WTC11 (cell line): ENCODE measurements at regions of chr3 and their contacts with region 1.

Region 1: GRCh38 chr3:58008140-58009025 is at the start of gene FLNB:
- DNase-seq: peak; percentile 82
- ATAC-seq: peak; percentile 73
- H3K4me3 Mint-ChIP-seq: peak within 1 kb of the TSS; percentile 92
- H3K27ac Mint-ChIP-seq: peak within 1 kb of the TSS; percentile 92
- H3K4me1 Mint-ChIP-seq: peaks cover 42% of the 10 kb centered on the region
- H3K27me3 Mint-ChIP-seq: no peaks in the 10 kb centered on the region
- CTCF ChIP-seq: peak; percentile 55
- total RNA-seq, gene FLNB: 107 to 127 TPM (median 107 TPM) in 3 replicates

Region 2: DNA sequence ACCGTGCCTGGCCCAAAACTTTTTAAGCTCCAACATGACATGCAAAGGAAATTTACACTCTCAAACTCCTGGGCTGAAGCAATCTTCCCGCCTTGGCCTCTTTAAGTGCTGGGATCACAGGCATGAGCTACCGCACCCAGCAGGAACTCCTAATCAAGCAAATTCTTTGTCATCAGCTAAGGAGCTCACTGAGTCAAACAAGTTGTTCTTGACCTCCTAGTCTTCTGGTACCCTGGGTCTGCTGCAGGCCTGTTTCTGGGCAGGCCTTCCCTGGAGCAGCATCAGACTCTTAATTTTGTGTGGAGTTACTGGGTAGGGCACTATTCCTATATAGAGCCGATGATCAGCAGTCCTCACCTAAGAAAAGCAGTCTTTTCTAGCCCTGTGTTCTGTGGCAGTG is 68.6 kb before region 1 on chr3:
- CTCF ChIA-PET with region 1: no interaction called
- POLR2A ChIA-PET with region 1: no interaction called
- DNase-seq: no peak
- ATAC-seq: peak; percentile 45
- H3K4me3 Mint-ChIP-seq: no peak overlapping the region
- H3K27ac Mint-ChIP-seq: peak overlapping the region; percentile 78
- H3K4me1 Mint-ChIP-seq: peaks cover 11% of the 10 kb centered on the region
- H3K27me3 Mint-ChIP-seq: no peaks in the 10 kb centered on the region; the same call in 1 of the 2 replicates
- CTCF ChIP-seq: no peak

Region 3: DNA sequence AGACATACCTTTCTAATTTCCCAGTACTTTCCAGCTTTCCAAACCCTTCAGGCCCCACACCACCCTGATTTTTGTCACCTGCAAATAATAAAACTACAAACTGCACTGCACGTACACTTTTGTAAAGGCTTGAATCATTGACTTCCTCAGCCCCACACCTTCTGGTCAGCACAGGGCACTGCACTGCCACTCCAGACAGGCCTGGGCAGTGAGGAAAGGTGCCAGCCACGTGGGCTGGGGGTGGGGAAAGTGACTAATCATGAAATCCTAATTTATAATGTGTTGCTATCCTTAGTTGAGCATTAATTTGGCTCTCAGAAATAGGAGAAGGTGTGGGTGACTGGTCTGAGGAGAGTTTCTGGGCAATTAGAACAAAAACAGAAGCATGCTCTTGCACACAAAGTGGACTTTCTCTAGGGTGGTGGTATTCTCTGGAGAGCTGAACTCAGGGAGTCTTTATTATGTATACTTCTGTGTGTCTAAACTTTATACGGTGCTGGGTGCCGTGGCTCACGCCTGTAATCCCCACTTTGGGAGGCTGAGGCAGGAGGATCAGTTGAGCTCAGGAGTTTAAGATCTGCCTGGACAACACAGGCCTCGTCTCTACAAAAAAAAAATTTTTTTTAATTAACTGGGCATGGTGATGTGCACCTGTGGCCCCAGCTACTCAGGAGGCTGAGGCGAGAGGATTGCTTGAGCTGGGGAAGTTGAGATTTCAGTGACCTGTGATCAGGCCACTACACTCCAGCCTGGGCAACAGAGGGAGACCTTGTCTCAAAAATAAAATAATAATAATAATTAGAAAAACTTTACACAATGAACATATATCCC is 58.4 kb before region 1 on chr3:
- CTCF ChIA-PET with region 1: interaction called, 10 read pairs
- POLR2A ChIA-PET with region 1: no interaction called
- DNase-seq: no peak
- ATAC-seq: no peak
- H3K4me3 Mint-ChIP-seq: no peak overlapping the region
- H3K27ac Mint-ChIP-seq: no peak overlapping the region
- H3K4me1 Mint-ChIP-seq: peaks cover 38% of the 10 kb centered on the region
- H3K27me3 Mint-ChIP-seq: no peaks in the 10 kb centered on the region
- CTCF ChIP-seq: no peak

Region 4: GRCh38 chr3:58020783-58021071 is 12.3 kb after region 1 on chr3:
- CTCF ChIA-PET with region 1: interaction called, 17 read pairs
- POLR2A ChIA-PET with region 1: interaction called, 8 read pairs
- DNase-seq: no peak
- ATAC-seq: no peak
- H3K4me3 Mint-ChIP-seq: peak overlapping the region; percentile 42
- H3K27ac Mint-ChIP-seq: peak overlapping the region; percentile 99
- H3K4me1 Mint-ChIP-seq: peaks cover 84% of the 10 kb centered on the region
- H3K27me3 Mint-ChIP-seq: no peaks in the 10 kb centered on the region
- CTCF ChIP-seq: no peak

Region 5: DNA sequence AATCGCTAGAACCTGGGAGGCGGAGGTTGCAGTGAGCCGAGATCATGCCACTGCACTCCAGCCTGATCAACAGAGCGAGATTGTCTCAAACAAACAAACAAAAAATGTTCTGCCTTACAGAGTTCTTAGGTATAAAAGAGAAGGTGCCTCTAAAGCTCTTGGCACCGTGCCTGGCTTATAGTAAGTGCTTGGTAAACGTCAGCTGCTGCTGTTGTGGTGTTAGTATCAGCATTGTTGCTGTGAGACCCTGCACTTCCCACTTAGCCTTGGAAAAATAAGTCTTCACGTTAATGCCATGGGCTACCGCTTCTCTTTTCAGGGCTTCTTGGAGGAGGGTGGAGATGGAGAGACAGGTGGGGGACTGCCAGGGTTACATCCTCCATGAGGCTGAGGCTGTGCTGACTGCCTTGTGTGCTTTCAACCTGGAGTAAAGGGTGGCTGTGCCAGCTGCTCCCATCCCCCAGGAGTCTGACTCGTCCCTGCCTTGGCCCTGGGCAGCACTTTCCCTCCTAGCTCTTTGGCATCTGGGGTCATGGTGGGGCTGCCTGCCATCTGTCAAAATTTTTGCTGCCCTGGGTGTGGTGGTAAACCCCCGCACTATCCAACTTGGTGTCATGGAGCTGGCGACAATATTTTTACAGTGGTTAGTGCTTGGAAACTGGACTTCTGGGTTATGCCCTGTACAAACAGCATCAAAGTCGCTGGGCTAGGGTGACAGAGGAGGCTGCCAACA is 17.6 kb after region 1 on chr3:
- CTCF ChIA-PET with region 1: interaction called, 17 read pairs
- POLR2A ChIA-PET with region 1: no interaction called
- DNase-seq: no peak
- ATAC-seq: no peak
- H3K4me3 Mint-ChIP-seq: no peak overlapping the region
- H3K27ac Mint-ChIP-seq: peak overlapping the region; percentile 98
- H3K4me1 Mint-ChIP-seq: peaks cover 84% of the 10 kb centered on the region
- H3K27me3 Mint-ChIP-seq: no peaks in the 10 kb centered on the region
- CTCF ChIP-seq: no peak

Region 6: DNA sequence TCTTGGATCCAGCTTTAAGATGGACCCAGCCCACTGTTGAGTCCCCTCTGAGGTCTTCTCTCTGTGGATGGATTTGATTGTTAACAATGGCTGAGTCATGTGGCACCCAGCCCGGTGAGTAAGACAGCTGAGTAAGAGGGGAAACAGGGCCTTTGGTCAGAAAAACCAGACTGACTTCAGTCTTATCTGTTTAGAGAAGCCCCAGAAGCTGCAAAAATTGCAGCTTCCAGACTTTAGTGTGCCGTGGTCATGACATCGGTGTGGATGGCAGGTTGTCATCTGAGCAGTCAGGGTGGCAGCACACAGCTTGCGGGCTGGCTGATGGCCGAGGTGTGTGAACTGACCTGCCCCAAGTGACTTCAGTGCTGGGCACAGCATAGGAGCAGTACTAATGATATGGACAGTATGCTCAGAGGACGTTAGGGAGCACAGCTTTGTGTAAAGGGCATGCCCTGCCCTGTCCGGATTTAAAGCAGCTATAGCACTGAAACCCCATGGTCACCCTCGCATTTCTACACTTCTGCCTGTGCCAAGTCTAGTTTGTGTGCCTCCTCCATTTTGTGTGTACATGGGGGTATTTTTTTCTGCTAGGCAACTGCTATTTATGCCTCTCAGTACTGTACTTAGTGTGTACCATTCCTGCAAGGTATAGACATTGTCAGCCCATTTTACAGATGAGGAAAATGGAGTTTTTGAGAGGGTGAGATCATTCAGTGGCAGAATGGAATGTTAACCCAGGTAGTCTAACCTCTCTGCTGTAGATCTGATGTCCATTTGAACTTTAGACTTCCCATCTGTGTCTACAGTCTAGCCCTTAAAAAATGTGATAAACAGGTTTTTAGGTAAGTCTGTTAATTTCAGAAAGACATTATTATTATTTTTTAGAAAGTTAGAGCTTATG is 44.2 kb after region 1 on chr3:
- CTCF ChIA-PET with region 1: interaction called, 4 read pairs
- POLR2A ChIA-PET with region 1: interaction called, 19 read pairs
- DNase-seq: no peak
- ATAC-seq: no peak
- H3K4me3 Mint-ChIP-seq: no peak overlapping the region
- H3K27ac Mint-ChIP-seq: peak overlapping the region; percentile 57; the same call in 1 of the 2 replicates
- H3K4me1 Mint-ChIP-seq: peaks cover 54% of the 10 kb centered on the region
- H3K27me3 Mint-ChIP-seq: no peaks in the 10 kb centered on the region
- CTCF ChIP-seq: no peak

Region 7: GRCh38 chr3:58059349-58060321 is 51.3 kb after region 1 on chr3:
- CTCF ChIA-PET with region 1: interaction called, 23 read pairs
- POLR2A ChIA-PET with region 1: no interaction called
- DNase-seq: no peak
- ATAC-seq: peak; percentile 35
- H3K4me3 Mint-ChIP-seq: no peak overlapping the region
- H3K27ac Mint-ChIP-seq: peak overlapping the region; percentile 87
- H3K4me1 Mint-ChIP-seq: peaks cover 60% of the 10 kb centered on the region
- H3K27me3 Mint-ChIP-seq: no peaks in the 10 kb centered on the region
- CTCF ChIP-seq: no peak

Region 8: DNA sequence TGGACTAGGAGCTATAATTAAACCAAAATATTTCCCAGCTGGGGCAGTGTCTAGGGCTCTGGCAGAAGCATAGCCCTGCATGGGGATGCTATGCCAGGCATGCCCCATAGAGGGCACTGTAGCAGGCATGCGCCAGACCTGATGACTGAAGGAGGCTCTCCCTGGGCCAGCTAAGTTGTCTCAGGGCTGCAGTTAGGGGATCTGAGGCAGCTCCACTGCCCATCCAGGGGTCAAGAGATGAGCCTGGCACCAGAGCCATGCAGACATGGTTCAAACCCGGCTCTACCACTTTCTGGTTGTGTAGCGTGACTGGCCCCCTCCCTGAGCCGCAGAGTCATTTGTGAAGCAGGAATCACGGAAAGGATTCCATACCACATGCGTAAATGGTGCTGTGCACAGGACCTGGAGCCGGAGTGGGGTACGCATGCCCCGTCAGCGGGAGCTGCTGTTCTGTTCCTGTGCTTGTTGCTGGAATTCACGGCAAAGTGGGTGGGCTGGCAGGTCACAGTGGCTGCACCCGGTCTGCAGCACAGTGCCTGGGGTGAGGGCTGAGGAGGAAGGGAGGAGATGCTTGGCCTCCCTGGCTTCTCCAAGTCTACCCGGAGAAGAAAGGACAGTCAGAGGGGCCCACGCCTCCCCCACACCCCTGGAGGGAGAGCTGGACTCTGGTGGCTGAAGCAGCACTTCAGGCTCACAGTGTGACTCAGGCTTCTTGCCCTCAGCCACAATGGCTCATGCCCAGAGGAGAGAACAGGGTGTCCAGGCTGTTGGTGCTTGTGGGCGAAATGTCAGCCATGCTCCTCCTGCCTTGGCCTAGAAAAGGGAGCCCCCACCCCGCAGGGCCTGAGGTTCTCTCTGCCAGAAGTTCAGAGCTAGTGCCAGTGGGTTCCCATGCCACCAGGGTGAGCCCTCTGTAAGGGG is 159.3 kb after region 1 on chr3:
- CTCF ChIA-PET with region 1: interaction called, 30 read pairs
- POLR2A ChIA-PET with region 1: interaction called, 3 read pairs
- DNase-seq: peak; percentile 82
- ATAC-seq: peak; percentile 94
- H3K4me3 Mint-ChIP-seq: no peak overlapping the region
- H3K27ac Mint-ChIP-seq: no peak overlapping the region
- H3K4me1 Mint-ChIP-seq: peaks cover 2% of the 10 kb centered on the region; the same call in 1 of the 2 replicates
- H3K27me3 Mint-ChIP-seq: no peaks in the 10 kb centered on the region
- CTCF ChIP-seq: peak; percentile 97